Activated CD8-positive, alpha-beta T cell treated with anti-CD3 and anti-CD28 coated beads for 36 hours (primary cell): ENCODE measurements at regions of chr12 and their contacts with region 1.

Region 1: DNA sequence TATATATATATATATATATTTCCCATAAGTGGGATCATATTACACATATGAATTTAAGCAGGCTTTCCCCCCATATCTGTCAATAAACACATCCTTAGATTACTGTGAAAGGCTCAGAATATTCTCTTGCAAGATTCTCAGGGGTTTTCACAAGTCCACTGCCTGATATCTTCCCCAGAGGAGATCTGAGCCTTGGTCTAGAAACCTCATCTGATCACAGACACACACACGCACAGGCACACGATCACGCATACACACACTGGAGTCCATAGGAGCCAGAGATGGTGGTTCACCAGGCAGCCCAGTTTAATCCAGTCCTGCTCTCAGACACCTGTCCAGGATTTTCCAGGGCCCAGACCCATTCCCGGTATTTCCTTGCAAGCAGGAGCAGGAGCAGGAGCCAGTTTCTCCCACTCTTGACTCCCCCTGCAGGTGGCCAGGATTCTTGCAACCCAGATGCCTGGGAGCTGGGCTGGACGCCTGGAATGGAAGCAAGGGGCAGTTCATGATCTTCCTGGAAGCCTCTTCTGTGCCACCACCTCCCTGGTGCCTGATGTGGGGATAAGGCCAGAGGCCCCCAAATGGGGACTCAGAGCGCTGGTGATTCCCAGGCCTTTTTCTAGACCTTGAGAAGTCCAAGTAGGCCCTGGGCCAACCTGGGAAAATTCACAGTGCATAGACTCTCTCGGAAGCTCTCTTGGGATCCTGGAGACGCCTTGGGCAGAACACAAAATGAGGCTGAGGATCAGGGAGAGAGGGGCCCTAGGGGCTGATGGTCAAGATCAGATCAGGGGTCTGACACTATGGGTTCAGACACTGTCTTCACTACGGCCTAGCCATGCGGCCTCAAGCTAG is 16.5 kb upstream of the KRT78 start:
- DNase-seq: peak; percentile 26
- ATAC-seq: no peak
- H3K4me3 Mint-ChIP-seq: no peak overlapping the region
- H3K27ac Mint-ChIP-seq: no peak overlapping the region
- H3K4me1 Mint-ChIP-seq: peaks cover 10% of the 10 kb centered on the region
- H3K27me3 Mint-ChIP-seq: no peaks in the 10 kb centered on the region
- CTCF ChIP-seq: peak; percentile 81

Region 2: DNA sequence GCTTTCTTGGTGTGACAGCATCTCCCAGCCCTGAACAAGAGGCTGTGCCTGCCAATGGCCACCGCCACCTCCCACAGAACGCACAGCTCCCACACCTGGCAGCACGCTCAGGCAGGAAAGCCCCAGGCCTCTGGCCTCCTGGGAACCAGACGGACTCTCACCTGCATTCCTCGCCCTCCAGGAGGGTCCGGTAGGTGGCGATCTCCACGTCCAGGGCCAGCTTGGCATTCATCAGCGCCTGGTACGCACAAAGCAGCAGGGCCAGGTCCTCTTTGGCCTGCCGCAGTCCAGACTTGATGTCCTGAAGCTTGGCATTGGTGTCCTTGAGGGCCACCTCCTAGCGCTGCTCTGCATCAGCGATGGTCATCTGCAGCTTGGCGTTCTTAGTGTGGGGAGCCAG is 149.9 kb before region 1 on chr12:
- CTCF ChIA-PET with region 1: interaction called, 13 read pairs
- POLR2A ChIA-PET with region 1: no interaction called
- intact Hi-C with region 1: loop called (anchors 10 kb)
- DNase-seq: peak; percentile 4
- ATAC-seq: no peak
- H3K4me3 Mint-ChIP-seq: no peak overlapping the region
- H3K27ac Mint-ChIP-seq: no peak overlapping the region
- H3K4me1 Mint-ChIP-seq: peaks cover 7% of the 10 kb centered on the region
- H3K27me3 Mint-ChIP-seq: peaks cover 26% of the 10 kb centered on the region
- CTCF ChIP-seq: no peak

Region 3: GRCh38 chr12:52906774-52907486 is 41.6 kb after region 1 on chr12:
- CTCF ChIA-PET with region 1: no interaction called
- POLR2A ChIA-PET with region 1: no interaction called
- intact Hi-C with region 1: no loop called
- DNase-seq: no peak
- ATAC-seq: no peak
- H3K4me3 Mint-ChIP-seq: no peak overlapping the region
- H3K27ac Mint-ChIP-seq: no peak overlapping the region
- H3K4me1 Mint-ChIP-seq: peaks cover 4% of the 10 kb centered on the region
- H3K27me3 Mint-ChIP-seq: no peaks in the 10 kb centered on the region
- CTCF ChIP-seq: no peak